ENCODE measurements at regions of chr16 and their contacts with region 1.

Region 1: GRCh38 chr16:4330277-4330874 is 14.5 kb downstream of the GLIS2 start:
- DNase-seq: peak; percentile 58
- H3K4me3 ChIP-seq: no peak overlapping the region
- H3K27ac ChIP-seq: no peak overlapping the region
- H3K4me1 ChIP-seq: peaks cover 23% of the 10 kb centered on the region
- H3K27me3 ChIP-seq: no peaks in the 10 kb centered on the region
- CTCF ChIP-seq: peak; percentile 97 to 99
- POLR2A ChIP-seq: no peak

Region 2: DNA sequence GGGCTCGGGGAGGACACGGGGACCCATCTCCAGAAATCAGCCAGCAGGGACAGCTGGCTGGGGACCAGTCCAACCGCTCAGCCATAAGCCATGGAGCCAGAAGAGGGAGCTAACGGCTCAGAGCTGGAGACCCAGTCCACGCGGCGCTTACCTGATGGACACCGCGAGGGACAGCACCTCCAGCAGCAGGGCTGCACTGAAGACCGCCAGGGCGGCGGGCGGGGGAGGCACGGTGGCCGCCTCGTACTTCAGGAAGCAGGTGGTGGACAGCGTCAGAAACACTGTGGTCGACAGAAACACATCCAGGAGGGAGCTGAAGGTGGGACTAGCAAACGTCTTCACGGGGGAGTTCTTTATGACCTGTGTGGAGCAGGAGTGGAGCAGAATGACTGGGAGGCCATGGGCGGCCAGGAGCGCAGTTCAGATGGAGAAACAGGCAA is 347.3 kb before region 1 on chr16:
- CTCF ChIA-PET with region 1: interaction called, 32 read pairs
- POLR2A ChIA-PET with region 1: no interaction called
- dilution Hi-C with region 1: no loop called
- intact Hi-C with region 1: loop called (anchors 1 kb)
- DNase-seq: peak; percentile 72
- H3K4me3 ChIP-seq: no peak overlapping the region
- H3K27ac ChIP-seq: no peak overlapping the region
- H3K4me1 ChIP-seq: no peaks in the 10 kb centered on the region
- H3K27me3 ChIP-seq: no peaks in the 10 kb centered on the region
- CTCF ChIP-seq: peak; percentile 71 to 90
- POLR2A ChIP-seq: no peak

Region 3: DNA sequence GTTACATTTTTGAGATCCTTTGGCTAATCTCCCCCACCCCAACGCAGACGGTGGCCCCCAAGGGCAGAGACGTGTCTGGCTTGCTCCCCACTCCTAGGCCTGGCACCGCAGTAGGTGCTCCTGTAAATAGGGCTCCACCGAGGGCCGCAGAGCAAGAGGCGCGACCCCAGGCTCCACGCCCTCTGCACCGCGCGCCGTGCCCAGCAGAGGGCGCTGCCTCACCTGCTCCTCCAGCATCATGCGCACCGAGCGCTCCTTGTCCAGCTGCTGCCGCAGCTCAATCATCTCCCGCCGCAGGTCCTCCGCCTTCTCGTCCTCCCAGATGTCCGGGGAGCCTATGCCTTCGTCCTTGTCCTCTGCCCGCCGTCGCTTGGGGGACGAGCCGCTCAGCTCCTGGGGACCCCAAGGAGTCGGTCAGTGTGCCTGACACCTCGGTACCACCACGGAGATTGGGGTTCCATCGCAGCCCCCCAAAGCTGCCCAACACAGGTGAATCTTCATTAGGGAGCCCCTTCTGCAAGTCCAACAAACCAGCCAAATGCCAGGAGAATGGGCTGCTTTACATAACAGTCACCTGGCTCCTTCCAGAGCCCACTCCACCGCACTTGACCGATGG is 68.7 kb before region 1 on chr16:
- CTCF ChIA-PET with region 1: interaction called, 45 read pairs
- POLR2A ChIA-PET with region 1: no interaction called
- dilution Hi-C with region 1: no loop called
- intact Hi-C with region 1: no loop called
- DNase-seq: peak; percentile 14
- H3K4me3 ChIP-seq: no peak overlapping the region
- H3K27ac ChIP-seq: no peak overlapping the region
- H3K4me1 ChIP-seq: no peaks in the 10 kb centered on the region
- H3K27me3 ChIP-seq: no peaks in the 10 kb centered on the region
- CTCF ChIP-seq: peak; percentile 77
- POLR2A ChIP-seq: no peak

Region 4: DNA sequence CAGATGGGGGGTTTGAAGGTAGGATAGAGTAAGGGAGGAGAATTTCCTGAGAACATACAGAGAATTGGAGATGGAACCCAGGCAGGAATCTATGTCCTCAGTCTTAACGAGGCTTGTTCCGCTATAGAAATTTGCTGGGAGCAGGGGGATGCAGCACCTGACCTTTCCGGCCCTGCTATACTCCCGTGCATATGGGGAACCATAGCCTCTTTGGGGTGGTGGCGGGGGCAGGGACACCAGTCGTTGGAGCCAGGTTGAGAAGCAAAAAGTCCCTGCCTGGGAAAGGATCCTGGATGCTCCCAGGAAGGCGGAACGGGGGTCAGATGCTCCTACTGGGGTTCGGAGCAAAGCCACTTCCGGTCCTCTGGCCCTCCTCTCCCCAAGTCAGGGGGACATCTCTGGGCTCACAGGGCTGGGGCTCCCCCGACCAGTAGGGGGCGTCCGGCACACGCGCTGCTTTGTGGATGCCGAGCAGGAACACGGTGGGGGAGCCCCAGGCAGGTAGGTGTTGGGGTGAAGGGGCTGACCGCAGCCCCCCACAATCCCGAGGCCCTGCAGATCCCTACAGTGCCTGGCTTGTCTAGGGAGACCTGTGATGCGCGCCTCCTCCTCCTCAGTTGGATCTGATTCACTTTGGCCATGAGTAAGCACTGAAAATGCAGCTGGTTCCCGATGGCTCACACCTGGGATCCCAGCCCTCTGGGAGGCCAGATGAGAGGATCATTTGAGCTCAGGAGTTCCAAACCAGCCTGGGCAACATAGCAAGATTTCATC is 42.0 kb before region 1 on chr16:
- CTCF ChIA-PET with region 1: interaction called, 198 read pairs
- POLR2A ChIA-PET with region 1: no interaction called
- dilution Hi-C with region 1: no loop called
- intact Hi-C with region 1: loop called (anchors 1 kb)
- DNase-seq: peak; percentile 54
- H3K4me3 ChIP-seq: no peak overlapping the region
- H3K27ac ChIP-seq: no peak overlapping the region
- H3K4me1 ChIP-seq: no peaks in the 10 kb centered on the region
- H3K27me3 ChIP-seq: peaks cover 0 to 4% of the 10 kb centered on the region in 2 experiments
- CTCF ChIP-seq: peak; percentile 96 to 97
- POLR2A ChIP-seq: no peak

Region 5: GRCh38 chr16:4307215-4308037 is 22.9 kb before region 1 on chr16:
- CTCF ChIA-PET with region 1: interaction called, 135 read pairs
- POLR2A ChIA-PET with region 1: no interaction called
- dilution Hi-C with region 1: no loop called
- intact Hi-C with region 1: loop called (anchors 1 kb)
- DNase-seq: peak; percentile 88
- H3K4me3 ChIP-seq: peak overlapping the region in 2 of 3 experiments; percentile 25 to 33
- H3K27ac ChIP-seq: peak overlapping the region; percentile 76
- H3K4me1 ChIP-seq: peaks cover 7% of the 10 kb centered on the region
- H3K27me3 ChIP-seq: no peaks in the 10 kb centered on the region
- CTCF ChIP-seq: no peak
- POLR2A ChIP-seq: no peak

Region 6: GRCh38 chr16:4461250-4462085 is 131.1 kb after region 1 on chr16:
- CTCF ChIA-PET with region 1: no interaction called
- POLR2A ChIA-PET with region 1: no interaction called
- dilution Hi-C with region 1: no loop called
- intact Hi-C with region 1: no loop called
- DNase-seq: no peak
- H3K4me3 ChIP-seq: no peak overlapping the region
- H3K27ac ChIP-seq: no peak overlapping the region
- H3K4me1 ChIP-seq: no peaks in the 10 kb centered on the region
- H3K27me3 ChIP-seq: no peaks in the 10 kb centered on the region
- CTCF ChIP-seq: no peak
- POLR2A ChIP-seq: no peak

Measured in endothelial cell of umbilical vein (primary cell).